Left ventricle myocardium superior (tissue), 1 donor: ENCODE measurements at regions of chr4 and their contacts with region 1.

Region 1: GRCh38 chr4:76504613-76505465 is 69.8 kb downstream of the SHROOM3 start:
- DNase-seq: no peak
- ATAC-seq: peak; percentile 48

Region 2: GRCh38 chr4:76430519-76431388 is 74.1 kb before region 1 on chr4:
- intact Hi-C with region 1: loop called (anchors 5 kb)
- DNase-seq: no peak
- ATAC-seq: no peak

Region 3: DNA sequence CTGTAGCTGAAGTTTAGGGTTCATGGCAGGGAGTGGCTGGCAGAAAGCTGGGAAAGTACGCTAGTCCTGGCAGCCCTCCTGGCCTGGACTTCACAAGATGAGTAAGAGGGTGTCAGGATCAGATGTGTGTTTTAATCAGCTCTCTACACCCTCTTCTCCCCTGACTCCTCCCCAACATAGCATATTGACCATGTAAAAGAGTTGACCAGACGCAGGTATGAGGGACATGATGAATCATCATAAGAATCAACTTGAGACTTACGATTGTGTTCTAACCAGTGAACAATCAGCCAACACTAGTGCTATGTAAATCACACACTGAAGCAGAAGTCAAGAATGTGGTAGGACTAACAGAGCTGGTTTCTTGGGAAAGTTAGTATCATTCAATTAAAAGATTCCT is 387.8 kb after region 1 on chr4:
- intact Hi-C with region 1: no loop called
- DNase-seq: no peak
- ATAC-seq: no peak